ENCODE measurements at regions of chr10 and their contacts with region 1.

Region 1: GRCh38 chr10:102225646-102226541 is at the start of gene ELOVL3:
- DNase-seq: peak; percentile 91
- ATAC-seq: peak; percentile 96
- H3K4me3 Mint-ChIP-seq: peak within 1 kb of the TSS; percentile 32
- H3K27ac Mint-ChIP-seq: no peak within 1 kb of the TSS
- H3K4me1 Mint-ChIP-seq: peaks cover 24% of the 10 kb centered on the region
- H3K27me3 Mint-ChIP-seq: peaks cover 56% of the 10 kb centered on the region
- total RNA-seq, gene ELOVL3: not detected

Region 2: GRCh38 chr10:102245101-102245931 is 19.4 kb after region 1 on chr10 and contains the start of gene GBF1:
- CTCF ChIA-PET with region 1: interaction called, 113 read pairs
- POLR2A ChIA-PET with region 1: interaction called, 6 read pairs
- DNase-seq: peak; percentile 95
- ATAC-seq: peak; percentile 90
- H3K4me3 Mint-ChIP-seq: peak within 1 kb of the TSS; percentile 99
- H3K27ac Mint-ChIP-seq: peak within 1 kb of the TSS; percentile 89
- H3K4me1 Mint-ChIP-seq: peaks cover 48% of the 10 kb centered on the region
- H3K27me3 Mint-ChIP-seq: peaks cover 14% of the 10 kb centered on the region
- total RNA-seq, gene GBF1: 39.8 to 42.9 TPM

Region 3: GRCh38 chr10:102334101-102334500 is 108.2 kb after region 1 on chr10:
- CTCF ChIA-PET with region 1: interaction called, 18 read pairs
- POLR2A ChIA-PET with region 1: no interaction called
- DNase-seq: no peak
- ATAC-seq: no peak
- H3K4me3 Mint-ChIP-seq: no peak overlapping the region
- H3K27ac Mint-ChIP-seq: no peak overlapping the region
- H3K4me1 Mint-ChIP-seq: no peaks in the 10 kb centered on the region
- H3K27me3 Mint-ChIP-seq: no peaks in the 10 kb centered on the region

Region 4: GRCh38 chr10:102375250-102375649 is 149.4 kb after region 1 on chr10:
- CTCF ChIA-PET with region 1: interaction called, 27 read pairs
- POLR2A ChIA-PET with region 1: no interaction called
- DNase-seq: no peak
- ATAC-seq: peak; percentile 57
- H3K4me3 Mint-ChIP-seq: no peak overlapping the region
- H3K27ac Mint-ChIP-seq: no peak overlapping the region
- H3K4me1 Mint-ChIP-seq: no peaks in the 10 kb centered on the region
- H3K27me3 Mint-ChIP-seq: no peaks in the 10 kb centered on the region

Region 5: GRCh38 chr10:102420810-102421644 is 195.1 kb after region 1 on chr10 and contains the start of gene FBXL15:
- CTCF ChIA-PET with region 1: interaction called, 52 read pairs
- POLR2A ChIA-PET with region 1: no interaction called
- DNase-seq: peak; percentile 97
- ATAC-seq: peak; percentile 81
- H3K4me3 Mint-ChIP-seq: peak within 1 kb of the TSS; percentile 94
- H3K27ac Mint-ChIP-seq: peak within 1 kb of the TSS; percentile 93
- H3K4me1 Mint-ChIP-seq: peaks cover 42% of the 10 kb centered on the region
- H3K27me3 Mint-ChIP-seq: peaks cover 14% of the 10 kb centered on the region
- total RNA-seq, gene FBXL15: 12.7 to 13.8 TPM

Region 6: GRCh38 chr10:102503281-102504220 is 277.7 kb after region 1 on chr10 and contains the start of gene SUFU:
- CTCF ChIA-PET with region 1: interaction called, 17 read pairs
- POLR2A ChIA-PET with region 1: no interaction called
- DNase-seq: peak; percentile 99
- ATAC-seq: peak; percentile 74
- H3K4me3 Mint-ChIP-seq: no peak within 1 kb of the TSS
- H3K27ac Mint-ChIP-seq: peak within 1 kb of the TSS; percentile 83
- H3K4me1 Mint-ChIP-seq: peaks cover 29% of the 10 kb centered on the region
- H3K27me3 Mint-ChIP-seq: no peaks in the 10 kb centered on the region
- total RNA-seq, gene SUFU: 10.6 to 12.0 TPM